Activated T-helper 1 cell treated with anti-CD3 and anti-CD28 coated beads, Interleukin-12 subunit alpha, Interleukin-12 subunit beta, Interleukin-2, Interleukin-4 antibody, amounts not matched to agents 30 ng/mL and 10 ng/mL and 1 ng/mL, durations not matched to agents 14 hours and 24 hours and 36 hours (primary cell): ENCODE measurements at regions of chrX and their contacts with region 1.

Region 1: DNA sequence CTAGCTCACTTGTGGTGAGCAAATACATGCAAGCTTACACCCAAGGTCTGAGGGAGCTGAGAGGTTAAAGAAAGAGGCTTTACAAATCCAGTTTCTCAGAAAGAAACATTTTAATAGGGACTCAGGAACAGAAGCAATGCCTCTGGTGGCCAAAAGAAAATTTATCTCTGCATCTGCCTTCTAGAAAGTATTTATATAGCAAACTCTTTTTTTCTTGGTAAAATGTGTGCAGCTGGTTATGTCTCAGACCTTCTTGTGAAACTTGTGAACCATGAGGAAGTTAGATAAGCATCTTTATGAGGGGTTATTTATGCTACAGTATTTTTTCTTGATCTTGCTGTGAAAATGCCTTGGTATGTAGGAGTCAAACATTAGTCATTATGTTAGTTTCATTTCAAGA is 48.5 kb upstream of the CYSLTR1 start:
- DNase-seq: no peak
- H3K4me3 Mint-ChIP-seq: no peak overlapping the region
- H3K27ac Mint-ChIP-seq: peak overlapping the region; percentile 27
- H3K4me1 Mint-ChIP-seq: peaks cover 46% of the 10 kb centered on the region
- H3K27me3 Mint-ChIP-seq: no peaks in the 10 kb centered on the region

Region 2: GRCh38 chrX:77299549-77299948 is 1076.3 kb before region 1 on chrX:
- intact Hi-C with region 1: no loop called
- DNase-seq: no peak
- H3K4me3 Mint-ChIP-seq: no peak overlapping the region
- H3K27ac Mint-ChIP-seq: no peak overlapping the region
- H3K4me1 Mint-ChIP-seq: no peaks in the 10 kb centered on the region
- H3K27me3 Mint-ChIP-seq: no peaks in the 10 kb centered on the region

Region 3: GRCh38 chrX:77962068-77962902 is 413.6 kb before region 1 on chrX:
- intact Hi-C with region 1: loop called (anchors 10 kb)
- DNase-seq: peak; percentile 5
- H3K4me3 Mint-ChIP-seq: peak overlapping the region; percentile 80
- H3K27ac Mint-ChIP-seq: peak overlapping the region; percentile 99
- H3K4me1 Mint-ChIP-seq: peaks cover 54% of the 10 kb centered on the region
- H3K27me3 Mint-ChIP-seq: no peaks in the 10 kb centered on the region

Region 4: DNA sequence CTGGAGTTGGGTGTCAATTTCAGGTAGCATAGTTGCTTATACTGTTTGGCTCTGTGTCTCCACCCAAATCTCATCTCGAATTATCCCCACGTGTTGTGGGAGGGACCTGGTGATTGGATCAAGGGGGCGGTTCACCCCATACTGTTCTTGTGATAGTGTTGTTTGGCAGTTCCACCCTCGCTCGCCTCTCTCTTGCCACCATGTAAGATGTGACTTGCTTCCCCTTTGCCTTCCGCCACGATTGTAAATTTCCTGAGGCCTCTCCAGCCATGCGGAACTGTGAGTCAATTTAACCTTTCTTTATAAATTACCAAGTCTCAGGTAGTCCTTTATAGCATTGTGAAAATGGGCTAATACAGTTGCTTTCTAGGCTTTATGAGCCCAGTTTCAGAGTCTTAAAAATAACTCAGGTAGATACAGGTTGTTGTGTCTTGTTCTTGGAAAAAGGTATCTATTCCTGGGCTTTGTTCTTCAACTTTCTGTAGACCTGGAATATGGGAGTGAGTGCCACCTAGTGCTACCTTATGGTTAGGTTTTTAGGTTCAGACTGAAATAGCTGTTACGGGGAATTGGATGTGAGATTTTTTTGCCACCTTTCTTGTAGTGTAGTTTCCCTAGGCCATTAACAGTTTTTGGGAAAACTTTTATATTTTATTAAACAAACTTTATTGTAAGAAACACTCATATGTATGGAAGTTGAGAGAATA is 256.2 kb before region 1 on chrX:
- intact Hi-C with region 1: loop called (anchors 5 kb)
- DNase-seq: no peak
- H3K4me3 Mint-ChIP-seq: no peak overlapping the region
- H3K27ac Mint-ChIP-seq: no peak overlapping the region
- H3K4me1 Mint-ChIP-seq: peaks cover 62% of the 10 kb centered on the region
- H3K27me3 Mint-ChIP-seq: no peaks in the 10 kb centered on the region

Region 5: DNA sequence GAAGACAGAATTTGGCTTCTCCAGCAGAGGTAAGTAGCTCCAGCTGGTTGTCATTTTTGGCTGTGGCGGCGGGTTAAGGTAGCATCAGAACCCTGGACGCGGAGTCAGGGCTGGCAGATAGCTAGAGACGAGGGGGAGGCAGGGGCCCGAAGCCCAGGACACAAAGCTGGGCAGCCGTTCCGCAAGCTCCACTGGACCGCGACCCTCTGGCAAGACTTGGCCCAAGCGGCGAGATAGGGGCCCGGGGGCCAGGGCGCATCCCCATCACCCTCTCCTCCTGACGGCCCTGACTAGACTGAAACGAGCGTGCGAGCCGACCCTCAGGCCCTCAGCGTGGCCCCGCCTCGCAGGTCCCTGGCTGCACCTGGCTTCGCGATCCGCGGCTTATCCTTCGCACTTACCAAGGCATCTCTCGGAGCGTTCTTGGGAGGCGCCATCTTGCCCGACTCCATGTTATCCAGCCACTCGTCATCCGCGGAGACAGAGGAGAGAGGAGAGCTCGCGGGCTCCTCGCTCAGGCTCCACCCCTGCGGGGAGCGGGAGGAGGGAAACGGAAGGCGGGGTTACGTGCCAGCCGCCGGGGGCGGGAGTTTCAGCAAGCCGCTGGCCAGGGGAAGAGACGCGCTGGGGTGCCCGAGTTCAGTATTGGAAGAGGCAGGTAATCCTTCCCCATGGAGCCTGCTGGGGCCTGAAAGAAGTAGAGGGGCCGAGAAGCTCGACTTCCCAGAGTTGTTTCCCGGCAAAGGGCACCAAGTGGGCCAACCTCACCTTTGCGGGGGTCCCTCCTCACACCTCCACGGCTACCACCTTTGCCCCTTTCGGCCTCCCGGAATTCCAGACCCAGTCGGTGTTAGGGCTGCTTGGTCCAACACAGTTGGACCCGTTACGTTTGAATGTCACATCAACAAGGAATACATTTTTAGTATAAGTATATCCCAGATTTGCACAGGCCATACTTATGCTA is 236.5 kb before region 1 on chrX and contains the start of gene TAF9B:
- intact Hi-C with region 1: loop called (anchors 1 kb)
- DNase-seq: peak; percentile 78
- H3K4me3 Mint-ChIP-seq: peak within 1 kb of the TSS; percentile 92
- H3K27ac Mint-ChIP-seq: peak within 1 kb of the TSS; percentile 86
- H3K4me1 Mint-ChIP-seq: no peaks in the 10 kb centered on the region
- H3K27me3 Mint-ChIP-seq: no peaks in the 10 kb centered on the region
- total RNA-seq, gene TAF9B: 14.9 and 15.0 TPM in 2 replicates

Region 6: GRCh38 chrX:78283511-78283910 is 92.4 kb before region 1 on chrX:
- intact Hi-C with region 1: no loop called
- DNase-seq: no peak
- H3K4me3 Mint-ChIP-seq: no peak overlapping the region
- H3K27ac Mint-ChIP-seq: no peak overlapping the region
- H3K4me1 Mint-ChIP-seq: no peaks in the 10 kb centered on the region
- H3K27me3 Mint-ChIP-seq: no peaks in the 10 kb centered on the region

Region 7: DNA sequence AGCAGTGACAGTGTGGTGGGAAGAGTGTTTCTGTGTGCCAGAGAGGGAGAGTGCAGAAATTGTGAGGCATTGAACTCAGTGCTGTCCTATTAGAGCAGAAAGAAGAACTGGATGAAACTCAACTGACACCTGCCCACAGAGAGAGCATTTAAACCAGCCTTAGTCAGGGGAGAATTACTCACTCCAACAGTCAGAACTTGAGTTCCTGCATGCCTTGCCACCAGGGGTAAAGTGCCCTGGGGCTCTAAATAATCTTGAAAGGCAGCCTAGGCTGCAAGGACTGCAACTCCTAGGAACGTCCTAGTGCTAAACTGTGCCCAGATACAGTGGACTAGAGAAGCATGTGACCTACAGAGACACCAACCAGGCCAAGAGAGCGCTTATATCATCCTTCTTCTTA is 61.3 kb before region 1 on chrX:
- intact Hi-C with region 1: loop called (anchors 2 kb)
- DNase-seq: no peak
- H3K4me3 Mint-ChIP-seq: peak overlapping the region; percentile 19
- H3K27ac Mint-ChIP-seq: peak overlapping the region; percentile 92
- H3K4me1 Mint-ChIP-seq: peaks cover 74% of the 10 kb centered on the region
- H3K27me3 Mint-ChIP-seq: no peaks in the 10 kb centered on the region

Region 8: DNA sequence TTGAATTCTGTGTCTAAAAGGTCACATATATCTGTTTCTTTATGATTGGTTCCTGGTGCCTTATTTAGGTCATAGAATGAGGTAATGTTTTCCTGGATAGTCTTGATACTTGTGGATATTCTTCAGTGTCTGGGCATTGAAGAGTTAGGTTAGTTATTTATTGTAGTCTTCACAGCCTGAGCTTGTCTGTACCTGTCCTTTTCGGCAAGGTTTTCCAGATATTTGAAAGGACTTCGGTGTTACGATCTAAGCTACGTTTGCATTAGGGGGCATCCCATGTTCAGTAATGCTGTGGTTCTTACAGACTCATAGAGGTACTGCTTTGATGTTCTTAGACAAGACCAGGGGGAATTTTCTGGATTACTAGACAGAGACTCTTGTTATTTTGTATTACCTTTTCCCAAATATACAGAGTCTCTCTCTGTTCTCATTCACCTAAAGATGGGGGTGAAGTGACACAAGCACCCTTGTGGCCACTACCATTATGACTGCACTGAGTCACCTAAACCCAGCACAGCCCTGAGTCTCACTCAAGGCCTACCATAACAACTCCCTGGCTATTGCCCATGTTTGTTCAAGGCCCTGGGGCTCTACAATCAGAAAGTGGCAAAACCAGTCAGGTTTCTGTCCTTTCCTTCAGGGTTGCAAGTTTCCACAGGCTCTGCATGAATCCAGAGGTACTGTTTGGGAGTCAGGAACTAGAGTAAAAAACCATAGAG is 18.4 kb before region 1 on chrX:
- intact Hi-C with region 1: no loop called
- DNase-seq: no peak
- H3K4me3 Mint-ChIP-seq: no peak overlapping the region
- H3K27ac Mint-ChIP-seq: no peak overlapping the region
- H3K4me1 Mint-ChIP-seq: no peaks in the 10 kb centered on the region
- H3K27me3 Mint-ChIP-seq: peaks cover 2% of the 10 kb centered on the region

Region 9: GRCh38 chrX:78979789-78980464 is 604.0 kb after region 1 on chrX:
- intact Hi-C with region 1: loop called (anchors 2 kb)
- DNase-seq: no peak
- H3K4me3 Mint-ChIP-seq: peak overlapping the region; percentile 67
- H3K27ac Mint-ChIP-seq: peak overlapping the region; percentile 100
- H3K4me1 Mint-ChIP-seq: peaks cover 35% of the 10 kb centered on the region
- H3K27me3 Mint-ChIP-seq: no peaks in the 10 kb centered on the region